A673 (cell line): ENCODE measurements at regions of chr11 and their contacts with region 1.

Region 1: DNA sequence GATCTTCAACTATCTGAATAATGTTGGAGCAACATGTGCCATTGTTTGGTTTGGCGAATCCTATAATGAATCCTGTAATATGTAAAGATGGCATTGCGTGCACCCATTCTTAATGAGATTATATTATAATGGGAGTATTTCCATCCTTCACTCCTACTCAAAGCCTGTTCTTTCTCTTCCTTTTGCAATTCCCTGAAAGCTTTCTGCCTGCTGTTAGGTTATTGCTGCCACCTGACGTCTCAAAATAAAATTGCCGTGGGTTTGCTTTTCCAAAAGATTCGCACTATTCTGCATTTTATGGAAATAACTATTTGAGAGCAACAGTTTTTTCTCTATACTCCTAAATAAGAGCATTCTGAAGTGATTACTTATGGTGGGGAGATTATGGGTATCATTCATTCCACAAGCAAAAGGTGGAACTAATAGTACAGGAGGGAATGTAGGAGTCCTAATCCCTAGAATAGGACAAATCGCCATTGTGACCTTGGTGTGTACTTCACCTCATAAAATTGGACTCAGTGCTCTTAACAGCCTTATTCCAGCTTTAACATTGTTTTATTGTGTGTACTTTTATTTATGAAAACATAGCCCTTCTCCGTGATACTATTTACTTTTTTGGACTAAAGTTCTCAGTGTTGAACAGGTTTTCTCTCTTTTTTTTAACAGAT is 69.6 kb upstream of the ALKBH3 start:
- DNase-seq: peak; percentile 84
- H3K4me3 ChIP-seq: no peak overlapping the region
- H3K27ac ChIP-seq: no peak overlapping the region
- H3K4me1 ChIP-seq: peaks cover 11% of the 10 kb centered on the region
- H3K27me3 ChIP-seq: no peaks in the 10 kb centered on the region
- CTCF ChIP-seq: peak; percentile 98

Region 2: GRCh38 chr11:42536611-42537360 is 1274.3 kb before region 1 on chr11:
- CTCF ChIA-PET with region 1: no interaction called
- POLR2A ChIA-PET with region 1: no interaction called
- intact Hi-C with region 1: no loop called
- DNase-seq: no peak
- H3K4me3 ChIP-seq: no peak overlapping the region
- H3K27ac ChIP-seq: no peak overlapping the region
- H3K4me1 ChIP-seq: no peaks in the 10 kb centered on the region
- H3K27me3 ChIP-seq: no peaks in the 10 kb centered on the region
- CTCF ChIP-seq: no peak

Region 3: DNA sequence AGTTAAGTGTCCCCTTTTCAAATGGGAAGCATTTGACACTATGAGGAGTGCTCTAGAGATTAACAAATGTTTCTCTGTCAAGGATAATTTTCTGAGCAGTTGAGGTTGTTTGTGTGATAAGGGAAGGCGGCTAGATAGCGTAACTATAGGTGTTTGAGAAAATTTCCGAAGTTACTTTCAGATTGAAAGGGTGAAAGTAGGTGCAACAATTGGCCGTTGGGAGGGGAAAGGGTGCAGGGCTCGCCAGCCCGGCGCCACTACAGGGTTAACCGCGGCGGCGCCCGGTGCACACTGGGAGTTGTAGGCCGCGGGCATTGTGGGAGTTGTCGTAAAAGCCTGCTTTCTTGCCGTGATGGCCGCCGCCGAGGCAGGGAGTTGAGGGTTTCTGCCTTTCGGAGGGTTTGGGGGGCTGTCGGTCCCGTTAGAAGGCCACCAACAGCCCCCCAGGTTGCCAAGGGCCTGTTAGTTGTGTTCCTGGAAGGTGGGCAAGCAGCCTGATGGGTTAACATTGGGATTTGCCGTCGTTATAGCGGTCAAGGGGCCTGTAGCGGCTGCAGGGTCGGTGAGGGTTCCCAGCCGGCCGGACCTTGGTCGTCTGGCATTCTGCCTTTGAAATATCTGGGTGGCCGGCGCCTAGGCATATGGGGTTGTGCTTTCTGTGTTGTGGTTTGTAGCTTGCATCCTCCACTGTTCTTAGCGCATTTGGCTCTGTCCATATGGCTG is 167.0 kb before region 1 on chr11:
- CTCF ChIA-PET with region 1: no interaction called
- POLR2A ChIA-PET with region 1: no interaction called
- intact Hi-C with region 1: loop called (anchors 2 kb)
- DNase-seq: peak; percentile 98
- H3K4me3 ChIP-seq: peak overlapping the region; percentile 61
- H3K27ac ChIP-seq: peak overlapping the region; percentile 83
- H3K4me1 ChIP-seq: peaks cover 6% of the 10 kb centered on the region
- H3K27me3 ChIP-seq: peaks cover 39% of the 10 kb centered on the region
- CTCF ChIP-seq: no peak

Region 4: DNA sequence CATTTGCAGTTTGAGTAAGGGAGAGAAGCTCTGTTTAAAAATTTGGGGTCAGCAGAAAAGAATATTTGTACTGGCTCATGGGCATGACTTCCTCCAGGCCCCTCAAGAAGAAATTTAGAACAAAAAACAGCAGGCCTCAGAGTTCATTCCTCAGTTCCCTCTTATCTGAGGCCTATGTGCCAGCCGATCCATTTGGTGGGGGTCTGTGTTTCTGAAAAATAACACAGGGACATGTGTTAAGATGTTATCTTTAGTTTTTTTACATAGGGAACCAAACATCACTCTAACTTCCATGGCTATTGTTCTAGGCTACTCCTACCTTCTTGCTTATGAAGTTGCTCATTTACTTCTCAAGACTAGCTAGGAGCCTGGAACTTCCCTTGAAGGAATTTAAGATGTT is 146.8 kb before region 1 on chr11:
- CTCF ChIA-PET with region 1: no interaction called
- POLR2A ChIA-PET with region 1: interaction called, 17 read pairs
- intact Hi-C with region 1: no loop called
- DNase-seq: no peak
- H3K4me3 ChIP-seq: no peak overlapping the region
- H3K27ac ChIP-seq: no peak overlapping the region
- H3K4me1 ChIP-seq: no peaks in the 10 kb centered on the region
- H3K27me3 ChIP-seq: peaks cover 8% of the 10 kb centered on the region
- CTCF ChIP-seq: no peak

Region 5: DNA sequence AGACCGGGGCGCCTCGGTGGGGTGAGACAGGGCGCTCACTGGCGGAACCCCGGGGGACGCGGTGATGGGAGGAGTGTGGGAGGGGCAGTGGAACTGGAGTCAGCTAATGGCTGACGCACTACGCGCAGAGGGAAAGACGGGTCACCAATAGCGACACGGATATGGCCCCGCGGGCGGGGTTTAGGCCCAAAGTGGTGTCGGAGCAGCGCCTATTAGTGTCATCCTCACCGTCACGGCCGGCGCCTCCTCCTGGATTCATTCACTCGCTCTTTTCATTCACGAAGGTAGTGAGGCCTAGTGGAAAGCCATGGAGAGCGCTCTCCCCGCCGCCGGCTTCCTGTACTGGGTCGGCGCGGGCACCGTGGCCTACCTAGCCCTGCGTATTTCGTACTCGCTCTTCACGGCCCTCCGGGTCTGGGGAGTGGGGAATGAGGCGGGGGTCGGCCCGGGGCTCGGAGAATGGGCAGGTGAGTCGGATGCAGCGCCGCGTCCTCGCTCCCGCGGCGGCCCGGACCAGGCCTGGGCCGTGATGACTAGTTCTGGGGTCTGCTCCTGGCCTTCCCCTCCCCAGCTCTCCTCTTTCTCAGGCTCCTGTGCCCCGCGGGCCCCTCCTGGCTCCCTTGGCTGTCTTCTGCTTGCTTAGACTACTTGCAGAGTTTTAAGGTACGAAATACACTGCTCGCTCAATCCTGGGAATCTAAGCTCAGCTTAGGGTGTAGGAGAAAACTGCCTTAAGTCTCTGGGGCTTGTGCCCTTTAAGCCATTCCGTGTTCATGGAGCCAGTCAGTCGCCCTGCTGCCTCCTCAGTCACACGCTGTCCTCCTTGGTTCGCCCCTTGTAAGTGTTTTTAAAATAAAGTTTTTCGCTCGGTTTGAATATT is 130.3 kb before region 1 on chr11 and contains the start of gene HSD17B12:
- CTCF ChIA-PET with region 1: interaction called, 3 read pairs
- POLR2A ChIA-PET with region 1: no interaction called
- intact Hi-C with region 1: loop called (anchors 2 kb)
- DNase-seq: peak; percentile 100
- H3K4me3 ChIP-seq: peak within 1 kb of the TSS; percentile 62
- H3K27ac ChIP-seq: peak within 1 kb of the TSS; percentile 93
- H3K4me1 ChIP-seq: peaks cover 37% of the 10 kb centered on the region
- H3K27me3 ChIP-seq: no peaks in the 10 kb centered on the region
- CTCF ChIP-seq: 0 out of 2 replicates have a peak, but pooled peaks have one; percentile 31
- total RNA-seq, gene HSD17B12: 305 and 307 TPM in 2 replicates